Mammary epithelial cell (primary cell): ENCODE measurements at regions of chr6 and their contacts with region 1.

Region 1: GRCh38 chr6:4210629-4211423 is 75.5 kb upstream of the ECI2 start:
- DNase-seq: peak; percentile 30
- H3K4me3 ChIP-seq: no peak overlapping the region
- H3K27ac ChIP-seq: no peak overlapping the region
- H3K4me1 ChIP-seq: peaks cover 6% of the 10 kb centered on the region
- H3K27me3 ChIP-seq: no peaks in the 10 kb centered on the region
- CTCF ChIP-seq: peak; percentile 72 to 84

Region 2: DNA sequence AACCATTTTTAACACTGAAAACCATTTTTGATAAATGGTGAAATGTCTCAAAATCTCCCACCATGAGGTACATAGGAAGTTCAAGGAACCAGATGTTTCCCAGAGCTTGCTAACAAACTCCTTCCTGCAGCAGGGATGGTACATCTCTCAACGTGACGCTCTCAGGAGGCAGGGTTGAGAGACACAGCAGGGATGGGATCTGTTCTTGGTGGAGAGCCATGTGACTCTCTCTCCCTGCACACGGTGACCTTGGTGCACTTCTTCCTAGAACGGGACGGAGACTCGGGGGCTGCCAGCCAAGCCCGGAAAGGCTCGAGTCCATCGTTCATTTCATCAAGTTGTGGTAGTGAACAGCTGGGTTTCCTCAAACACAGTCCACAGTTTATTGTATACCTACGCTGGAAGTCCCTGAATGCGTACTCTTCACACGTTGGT is 267.5 kb before region 1 on chr6:
- CTCF ChIA-PET with region 1: no interaction called
- dilution Hi-C with region 1: no loop called
- in situ Hi-C with region 1: no loop called
- intact Hi-C with region 1: no loop called
- DNase-seq: no peak
- H3K4me3 ChIP-seq: no peak overlapping the region
- H3K27ac ChIP-seq: no peak overlapping the region
- H3K4me1 ChIP-seq: no peaks in the 10 kb centered on the region
- H3K27me3 ChIP-seq: peaks cover 2% of the 10 kb centered on the region
- CTCF ChIP-seq: no peak

Region 3: GRCh38 chr6:4153514-4153985 is 57.3 kb before region 1 on chr6:
- CTCF ChIA-PET with region 1: no interaction called
- dilution Hi-C with region 1: no loop called
- in situ Hi-C with region 1: no loop called
- intact Hi-C with region 1: no loop called
- DNase-seq: no peak
- H3K4me3 ChIP-seq: no peak overlapping the region
- H3K27ac ChIP-seq: no peak overlapping the region
- H3K4me1 ChIP-seq: peaks cover 5% of the 10 kb centered on the region
- H3K27me3 ChIP-seq: peaks cover 2% of the 10 kb centered on the region
- CTCF ChIP-seq: no peak

Region 4: DNA sequence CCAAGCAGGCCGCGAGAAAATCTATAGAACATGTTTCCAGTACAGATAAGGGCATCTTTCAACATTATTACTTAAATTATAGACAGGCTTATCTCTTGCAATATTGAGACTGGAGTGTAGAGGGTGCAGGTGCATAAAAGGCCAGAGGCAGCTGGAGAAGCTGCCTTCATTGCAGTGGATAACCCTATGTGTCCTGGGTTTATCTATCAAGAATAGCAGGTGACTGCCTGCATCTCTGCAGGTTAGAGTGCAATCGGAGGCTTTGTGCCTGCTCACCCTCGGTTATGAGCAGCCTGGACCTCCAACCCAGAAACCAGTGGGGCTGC is 46.7 kb before region 1 on chr6:
- CTCF ChIA-PET with region 1: no interaction called
- dilution Hi-C with region 1: no loop called
- in situ Hi-C with region 1: no loop called
- intact Hi-C with region 1: loop called (anchors 5 kb)
- DNase-seq: no peak
- H3K4me3 ChIP-seq: no peak overlapping the region
- H3K27ac ChIP-seq: no peak overlapping the region
- H3K4me1 ChIP-seq: no peaks in the 10 kb centered on the region
- H3K27me3 ChIP-seq: no peaks in the 10 kb centered on the region
- CTCF ChIP-seq: peak in 1 of 2 donors; percentile 23

Region 5: GRCh38 chr6:4487546-4487945 is 276.7 kb after region 1 on chr6:
- CTCF ChIA-PET with region 1: no interaction called
- dilution Hi-C with region 1: no loop called
- in situ Hi-C with region 1: no loop called
- intact Hi-C with region 1: no loop called
- DNase-seq: peak; percentile 80
- H3K4me3 ChIP-seq: no peak overlapping the region
- H3K27ac ChIP-seq: no peak overlapping the region
- H3K4me1 ChIP-seq: peaks cover 5% of the 10 kb centered on the region
- H3K27me3 ChIP-seq: no peaks in the 10 kb centered on the region
- CTCF ChIP-seq: no peak